Heart left ventricle (tissue), 16 donors: ENCODE measurements at regions of chr10 and their contacts with region 1.

Region 1: DNA sequence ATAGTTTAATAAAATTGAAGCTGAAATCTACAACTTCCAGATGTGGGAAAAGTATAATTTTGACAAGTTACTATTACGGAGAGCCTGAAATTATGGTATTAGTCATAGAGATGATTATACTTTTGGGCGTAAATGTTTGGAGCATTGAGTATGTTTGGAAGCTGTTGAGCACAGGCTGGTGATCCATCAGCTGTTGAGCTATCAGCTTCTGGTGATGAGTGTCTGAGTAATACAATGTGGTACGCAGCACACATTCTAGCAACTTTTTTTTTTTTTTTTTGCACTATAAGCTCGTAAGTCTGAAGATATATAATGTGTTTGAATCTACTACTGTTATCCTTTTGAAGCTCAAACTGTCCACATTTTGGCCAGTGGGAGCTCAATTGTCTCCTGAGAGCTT is 123.4 kb downstream of the ATE1 start:
- DNase-seq: peak in 1 of 5 donors; percentile 23
- ATAC-seq: peak in 3 of 4 donors; percentile 20 to 93 (median 68)
- H3K4me3 ChIP-seq: no peak overlapping the region
- H3K27ac ChIP-seq: no peak overlapping the region
- H3K4me1 ChIP-seq: no peaks in the 10 kb centered on the region
- H3K27me3 ChIP-seq: no peaks in the 10 kb centered on the region
- CTCF ChIP-seq: no peak
- POLR2A ChIP-seq: no peak

Region 2: GRCh38 chr10:121860810-121861209 is 56.4 kb after region 1 on chr10:
- intact Hi-C with region 1: loop called in 1 of 10 experiments (anchors 10 kb)
- DNase-seq: no peak
- ATAC-seq: no peak
- H3K4me3 ChIP-seq: no peak overlapping the region
- H3K27ac ChIP-seq: no peak overlapping the region
- H3K4me1 ChIP-seq: peaks cover 0 to 5% (median 0%) of the 10 kb centered on the region in 12 donors
- H3K27me3 ChIP-seq: no peaks in the 10 kb centered on the region
- CTCF ChIP-seq: no peak
- POLR2A ChIP-seq: no peak